IMR-90 (cell line): ENCODE measurements at regions of chr12 and their contacts with region 1.

Region 1: DNA sequence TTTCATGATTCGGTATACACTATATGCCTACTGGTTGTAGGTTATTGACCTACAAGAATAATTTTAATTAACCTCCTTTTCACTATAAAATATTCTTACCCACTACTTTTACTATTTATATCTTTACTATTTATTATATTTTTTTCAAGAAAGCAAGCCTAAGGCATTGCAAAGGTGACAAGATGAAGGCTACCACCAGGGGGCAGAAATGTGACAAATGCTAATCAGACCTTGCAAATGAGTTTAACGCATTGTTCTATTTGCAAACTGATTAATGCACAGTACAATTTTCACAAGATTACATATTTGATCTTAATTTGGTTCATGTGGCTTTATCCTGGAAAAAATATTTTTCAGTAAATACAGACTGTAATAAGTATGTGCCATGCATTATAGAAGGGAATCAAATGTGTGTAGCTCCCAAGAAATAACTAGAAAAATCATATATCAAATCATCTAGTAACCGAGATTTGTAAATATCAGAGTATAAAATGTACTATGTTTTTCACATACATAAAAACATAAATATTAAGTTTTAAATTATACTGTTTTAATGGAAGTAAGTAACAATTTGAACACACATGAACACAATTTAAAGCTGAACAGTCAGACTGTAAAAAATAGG is 107.0 kb downstream of the ADAMTS20 start:
- DNase-seq: peak; percentile 59
- ATAC-seq: peak; percentile 48; the same call in 1 of the 2 replicates
- H3K4me3 ChIP-seq: no peak overlapping the region
- H3K27ac ChIP-seq: no peak overlapping the region
- H3K4me1 ChIP-seq: no peaks in the 10 kb centered on the region
- H3K27me3 ChIP-seq: no peaks in the 10 kb centered on the region
- CTCF ChIP-seq: peak; percentile 64
- POLR2A ChIP-seq: no peak
- RAD21 ChIP-seq: peak; percentile 51

Region 2: GRCh38 chr12:42884116-42884515 is 560.9 kb before region 1 on chr12:
- CTCF ChIA-PET with region 1: no interaction called
- POLR2A ChIA-PET with region 1: no interaction called
- dilution Hi-C with region 1: no loop called
- in situ Hi-C with region 1: no loop called
- intact Hi-C with region 1: no loop called
- DNase-seq: no peak
- ATAC-seq: no peak
- H3K4me3 ChIP-seq: no peak overlapping the region
- H3K27ac ChIP-seq: no peak overlapping the region
- H3K4me1 ChIP-seq: peaks cover 2% of the 10 kb centered on the region; the same call in 1 of the 2 replicates
- H3K27me3 ChIP-seq: no peaks in the 10 kb centered on the region
- CTCF ChIP-seq: no peak
- POLR2A ChIP-seq: no peak
- RAD21 ChIP-seq: no peak

Region 3: GRCh38 chr12:43733687-43734086 is 288.6 kb after region 1 on chr12:
- CTCF ChIA-PET with region 1: interaction called, 3 read pairs
- POLR2A ChIA-PET with region 1: no interaction called
- dilution Hi-C with region 1: no loop called
- in situ Hi-C with region 1: no loop called
- intact Hi-C with region 1: loop called (anchors 5 kb)
- DNase-seq: no peak
- ATAC-seq: no peak
- H3K4me3 ChIP-seq: no peak overlapping the region
- H3K27ac ChIP-seq: no peak overlapping the region
- H3K4me1 ChIP-seq: no peaks in the 10 kb centered on the region; the same call in 1 of the 2 replicates
- H3K27me3 ChIP-seq: no peaks in the 10 kb centered on the region
- CTCF ChIP-seq: no peak
- POLR2A ChIP-seq: no peak
- RAD21 ChIP-seq: no peak